ENCODE measurements at regions of chrX and their contacts with region 1.

Region 1: DNA sequence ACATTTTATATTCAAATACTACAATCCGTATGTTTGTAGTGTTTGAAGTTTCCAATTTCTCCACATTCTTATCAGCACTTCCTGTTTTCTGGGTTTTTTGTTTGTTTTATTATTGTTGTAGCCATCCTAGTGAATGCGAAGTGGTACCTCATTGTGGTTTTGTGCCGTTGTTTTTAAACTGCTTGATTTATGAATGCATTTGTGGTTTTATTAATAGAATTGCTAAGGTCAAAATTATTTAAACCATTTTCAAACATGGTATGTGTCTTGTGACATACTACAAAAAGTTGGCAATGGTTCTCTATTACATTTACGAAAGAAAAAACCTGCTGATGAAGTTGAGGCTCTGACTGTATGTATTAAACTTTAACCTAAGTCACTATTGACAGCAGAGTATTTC is 780.0 kb upstream of the MAGEB2 start:
- DNase-seq: peak; percentile 37
- ATAC-seq: no peak
- H3K4me3 ChIP-seq: no peak overlapping the region
- H3K27ac ChIP-seq: no peak overlapping the region
- H3K4me1 ChIP-seq: no peaks in the 10 kb centered on the region
- H3K27me3 ChIP-seq: no peaks in the 10 kb centered on the region
- CTCF ChIP-seq: no peak
- POLR2A ChIP-seq: no peak
- RAD21 ChIP-seq: no peak

Region 2: DNA sequence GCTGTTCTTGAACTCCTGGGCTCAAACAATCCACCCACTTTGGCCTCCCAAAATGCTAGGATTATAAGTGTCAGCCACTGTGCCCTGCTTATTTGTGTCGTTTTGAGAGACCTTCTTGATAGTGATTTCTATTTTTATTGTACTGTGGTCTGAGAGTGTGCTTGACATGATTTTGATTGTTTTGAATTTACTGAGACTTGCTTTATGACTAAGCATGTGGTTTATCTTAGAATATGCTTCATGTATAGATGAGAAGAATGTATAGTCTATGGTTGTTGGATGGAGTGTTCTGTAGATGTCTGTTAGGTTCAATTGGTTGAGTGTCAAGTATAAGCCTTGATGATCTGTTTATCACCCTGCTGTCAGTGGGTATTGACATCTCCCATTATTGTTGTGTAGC is 58.8 kb before region 1 on chrX:
- CTCF ChIA-PET with region 1: no interaction called
- POLR2A ChIA-PET with region 1: no interaction called
- dilution Hi-C with region 1: no loop called
- in situ Hi-C with region 1: no loop called
- intact Hi-C with region 1: no loop called
- DNase-seq: no peak
- ATAC-seq: no peak
- H3K4me3 ChIP-seq: no peak overlapping the region
- H3K27ac ChIP-seq: no peak overlapping the region
- H3K4me1 ChIP-seq: no peaks in the 10 kb centered on the region
- H3K27me3 ChIP-seq: no peaks in the 10 kb centered on the region
- CTCF ChIP-seq: no peak
- POLR2A ChIP-seq: no peak
- RAD21 ChIP-seq: no peak

Region 3: GRCh38 chrX:31366041-31366440 is 1930.6 kb after region 1 on chrX:
- CTCF ChIA-PET with region 1: no interaction called
- POLR2A ChIA-PET with region 1: no interaction called
- dilution Hi-C with region 1: no loop called
- in situ Hi-C with region 1: no loop called
- intact Hi-C with region 1: loop called (anchors 10 kb)
- DNase-seq: no peak
- ATAC-seq: no peak
- H3K4me3 ChIP-seq: no peak overlapping the region
- H3K27ac ChIP-seq: no peak overlapping the region
- H3K4me1 ChIP-seq: no peaks in the 10 kb centered on the region
- H3K27me3 ChIP-seq: no peaks in the 10 kb centered on the region
- CTCF ChIP-seq: no peak
- POLR2A ChIP-seq: no peak
- RAD21 ChIP-seq: no peak